ENCODE measurements at regions of chr14 and their contacts with region 1.

Region 1: GRCh38 chr14:53109105-53110041 is 43.8 kb downstream of the DDHD1 start:
- DNase-seq: peak; percentile 33 to 37 (median 33)
- H3K4me3 ChIP-seq: peak overlapping the region; percentile 44 to 99 (median 91)
- H3K4me3 Mint-ChIP-seq: no peak overlapping the region
- H3K27ac ChIP-seq: peak overlapping the region; percentile 18 to 91
- H3K27ac Mint-ChIP-seq: no peak overlapping the region
- H3K4me1 ChIP-seq: peaks cover 10 to 13% of the 10 kb centered on the region in 2 donors
- H3K4me1 Mint-ChIP-seq: peaks cover 5% of the 10 kb centered on the region
- H3K27me3 ChIP-seq: no peaks in the 10 kb centered on the region
- H3K27me3 Mint-ChIP-seq: peaks cover 0 to 1% (median 0%) of the 10 kb centered on the region in 3 donors
- CTCF ChIP-seq: no peak

Region 2: DNA sequence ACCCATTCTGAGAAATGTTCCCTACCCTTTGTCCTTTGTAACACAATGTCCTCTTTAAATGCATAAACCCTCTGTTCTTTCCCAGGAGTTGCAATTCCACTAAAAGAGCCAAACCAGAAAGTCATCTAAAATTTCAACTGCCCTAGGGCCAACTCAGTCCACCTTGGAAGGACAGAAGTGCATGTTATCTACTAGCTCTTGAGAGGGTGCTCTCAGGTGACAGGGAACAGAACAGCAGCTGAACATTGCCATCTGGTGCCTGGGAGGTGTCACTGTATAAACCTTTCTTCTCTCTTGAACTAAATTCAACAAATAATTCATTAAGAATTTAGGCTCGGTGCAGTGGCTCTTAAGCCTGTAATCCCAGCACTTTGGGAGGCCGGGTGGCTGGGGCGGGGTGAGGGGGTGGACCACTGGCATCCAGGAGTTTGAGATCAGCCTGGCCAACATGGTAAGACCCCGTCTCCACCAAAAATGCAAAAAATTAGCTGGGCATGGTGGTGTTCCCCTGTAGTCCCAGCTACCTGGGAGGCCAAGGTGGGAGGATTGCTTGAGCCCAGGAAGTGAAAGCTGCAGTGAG is 148.2 kb before region 1 on chr14:
- intact Hi-C with region 1: no loop called
- DNase-seq: peak; percentile 10 to 23 (median 20)
- H3K4me3 ChIP-seq: no peak overlapping the region
- H3K4me3 Mint-ChIP-seq: no peak overlapping the region
- H3K27ac ChIP-seq: no peak overlapping the region
- H3K27ac Mint-ChIP-seq: no peak overlapping the region
- H3K4me1 ChIP-seq: no peaks in the 10 kb centered on the region
- H3K4me1 Mint-ChIP-seq: no peaks in the 10 kb centered on the region
- H3K27me3 ChIP-seq: no peaks in the 10 kb centered on the region
- H3K27me3 Mint-ChIP-seq: peaks cover 0 to 7% (median 4%) of the 10 kb centered on the region in 3 donors
- CTCF ChIP-seq: peak; percentile 46

Region 3: DNA sequence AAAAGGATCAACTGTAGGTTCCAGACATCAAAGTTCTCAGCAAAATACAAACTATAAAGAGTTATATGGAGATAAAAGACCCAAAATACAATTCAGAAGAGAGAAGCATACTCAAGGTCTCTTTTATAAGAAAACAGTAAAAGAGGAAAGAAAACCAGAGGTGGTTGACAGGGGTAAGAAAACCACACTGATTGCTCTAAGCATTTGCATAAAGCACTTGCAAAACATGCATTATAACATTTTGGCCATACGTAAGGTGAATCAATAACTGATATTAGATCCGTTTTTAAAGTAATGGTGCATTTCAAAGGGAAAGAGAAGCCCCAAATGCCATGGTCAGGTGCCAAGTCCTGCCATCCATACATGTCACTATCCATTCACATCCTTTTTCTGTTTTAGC is 37.8 kb after region 1 on chr14:
- intact Hi-C with region 1: loop called in 1 of 2 experiments (anchors 5 kb)
- DNase-seq: no peak
- H3K4me3 ChIP-seq: no peak overlapping the region
- H3K4me3 Mint-ChIP-seq: no peak overlapping the region
- H3K27ac ChIP-seq: peak overlapping the region in 1 of 2 donors; percentile 28
- H3K27ac Mint-ChIP-seq: peak overlapping the region in 3 of 7 donors; percentile 43 to 65 (median 54)
- H3K4me1 ChIP-seq: peaks cover 31 to 55% of the 10 kb centered on the region in 2 donors
- H3K4me1 Mint-ChIP-seq: peaks cover 54% of the 10 kb centered on the region
- H3K27me3 ChIP-seq: no peaks in the 10 kb centered on the region
- H3K27me3 Mint-ChIP-seq: peaks cover 0 to 8% (median 6%) of the 10 kb centered on the region in 3 donors
- CTCF ChIP-seq: no peak

Region 4: DNA sequence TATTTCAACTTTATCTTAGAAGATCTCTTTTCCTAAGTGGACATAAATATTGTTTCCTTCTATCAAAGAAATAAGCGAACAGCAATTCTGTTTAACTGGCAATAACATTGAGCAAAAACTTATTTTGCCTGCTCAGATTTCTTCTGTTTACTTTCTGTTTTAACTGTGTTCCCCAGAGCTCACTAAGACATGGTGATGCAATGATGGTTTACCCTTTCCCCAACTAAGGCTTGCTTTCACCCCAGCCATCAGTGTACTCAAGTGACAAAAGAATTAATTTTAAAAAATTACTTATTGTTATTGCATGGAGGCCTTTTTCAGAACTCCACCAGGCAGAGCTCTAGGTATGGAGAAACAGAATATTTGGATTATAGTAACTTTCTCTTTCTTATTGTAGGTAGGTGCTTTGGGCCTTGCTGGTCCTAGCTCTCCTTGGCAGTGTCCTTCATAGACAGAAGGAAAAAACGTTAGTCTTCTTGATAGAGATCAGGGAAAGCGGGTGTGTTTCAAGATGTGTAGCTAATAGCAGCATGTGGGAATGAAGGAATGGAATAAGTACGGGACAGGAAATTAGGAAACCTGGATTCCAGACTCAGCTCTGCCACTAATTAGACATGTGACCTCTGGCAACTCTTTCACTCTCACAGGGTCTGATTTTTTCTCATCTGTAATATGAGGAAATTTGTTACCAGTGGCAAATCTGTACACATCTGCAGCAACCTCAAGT is 58.4 kb after region 1 on chr14:
- intact Hi-C with region 1: no loop called
- DNase-seq: no peak
- H3K4me3 ChIP-seq: no peak overlapping the region
- H3K4me3 Mint-ChIP-seq: no peak overlapping the region
- H3K27ac ChIP-seq: no peak overlapping the region
- H3K27ac Mint-ChIP-seq: peak overlapping the region in 2 of 7 donors; percentile 7 to 31
- H3K4me1 ChIP-seq: peaks cover 0 to under 1% of the 10 kb centered on the region in 2 donors
- H3K4me1 Mint-ChIP-seq: peaks cover 12% of the 10 kb centered on the region
- H3K27me3 ChIP-seq: no peaks in the 10 kb centered on the region
- H3K27me3 Mint-ChIP-seq: peaks cover 0 to 3% (median 0%) of the 10 kb centered on the region in 3 donors
- CTCF ChIP-seq: no peak

Measured in CD14-positive monocyte (primary cell).